ENCODE measurements at regions of chr14 and their contacts with region 1.

Region 1: GRCh38 chr14:55129428-55130195 is 560 bp downstream of the LGALS3 start:
- DNase-seq: peak; percentile 18 to 77 (median 50)
- H3K4me3 ChIP-seq: peak overlapping the region; percentile 51
- H3K4me3 Mint-ChIP-seq: peak overlapping the region; percentile 80 to 91 (median 85)
- H3K27ac ChIP-seq: no peak overlapping the region
- H3K27ac Mint-ChIP-seq: peak overlapping the region; percentile 53 to 90 (median 76)
- H3K4me1 ChIP-seq: peaks cover 18% of the 10 kb centered on the region
- H3K4me1 Mint-ChIP-seq: peaks cover 38 to 51% (median 41%) of the 10 kb centered on the region in 3 donors
- H3K27me3 ChIP-seq: no peaks in the 10 kb centered on the region
- H3K27me3 Mint-ChIP-seq: no peaks in the 10 kb centered on the region

Region 2: DNA sequence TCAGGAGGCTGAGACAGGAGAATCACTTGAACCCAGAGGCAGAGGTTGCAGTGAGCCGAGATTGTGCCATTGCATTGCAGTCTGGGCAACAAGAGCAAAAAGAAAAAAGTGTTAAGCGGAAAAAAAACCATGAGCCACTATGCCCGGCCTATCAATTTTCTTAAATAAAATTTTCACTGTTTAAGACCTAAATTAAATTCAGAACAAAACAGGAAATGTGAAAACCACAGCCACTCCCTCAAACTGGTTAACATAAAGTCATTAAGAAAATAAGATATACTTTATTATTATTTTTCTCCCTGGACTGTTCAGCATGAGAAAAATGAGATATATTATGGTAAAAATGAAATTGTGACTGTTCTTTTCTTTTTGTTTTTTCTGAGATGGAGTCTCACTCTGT is 182.4 kb before region 1 on chr14:
- CTCF ChIA-PET with region 1: no interaction called
- POLR2A ChIA-PET with region 1: no interaction called
- DNase-seq: no peak
- H3K4me3 ChIP-seq: no peak overlapping the region
- H3K4me3 Mint-ChIP-seq: peak overlapping the region in 1 of 7 donors; percentile 11
- H3K27ac ChIP-seq: no peak overlapping the region
- H3K27ac Mint-ChIP-seq: peak overlapping the region in 2 of 8 donors; percentile 15 to 57
- H3K4me1 ChIP-seq: no peaks in the 10 kb centered on the region
- H3K4me1 Mint-ChIP-seq: peaks cover 2 to 22% (median 7%) of the 10 kb centered on the region in 3 donors
- H3K27me3 ChIP-seq: no peaks in the 10 kb centered on the region
- H3K27me3 Mint-ChIP-seq: no peaks in the 10 kb centered on the region

Region 3: DNA sequence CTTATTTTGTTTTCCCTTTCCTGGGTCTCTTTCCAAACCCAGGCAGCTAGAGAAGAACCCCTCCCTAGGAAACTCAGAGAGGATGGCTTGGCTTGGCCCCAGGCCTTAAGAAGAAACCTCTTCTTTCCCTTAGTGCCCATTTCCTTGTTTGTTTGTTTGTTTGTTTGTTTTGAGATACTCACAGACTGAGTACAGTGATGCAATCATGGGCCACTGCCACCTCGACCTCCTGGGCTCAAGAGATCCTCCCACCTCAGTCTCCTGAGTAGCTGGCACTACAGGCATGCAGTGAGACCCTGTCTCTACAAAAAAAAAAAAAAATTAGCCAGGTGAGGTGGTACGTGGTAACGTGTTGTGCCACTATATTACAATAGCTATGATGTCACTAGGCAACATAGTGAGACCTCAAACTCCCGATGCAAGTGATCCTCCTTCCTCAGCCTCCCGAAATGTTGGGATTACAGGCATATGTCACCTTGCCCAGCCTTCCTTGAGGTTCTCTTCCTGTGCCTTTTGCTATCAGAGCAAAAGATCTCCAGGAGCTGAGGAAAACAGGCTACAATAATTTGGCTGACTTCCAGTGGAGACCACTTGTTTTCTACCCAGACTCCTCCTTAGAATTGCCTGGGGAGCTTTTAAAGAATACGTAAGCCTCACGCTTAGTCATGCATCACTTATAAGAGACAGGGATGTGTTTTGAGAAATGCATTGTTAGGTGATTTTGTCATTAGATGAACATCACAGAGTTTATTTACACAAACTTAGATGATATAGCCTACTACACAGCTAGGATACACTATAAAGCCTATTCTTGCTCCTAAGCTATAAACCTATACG is 35.1 kb before region 1 on chr14:
- CTCF ChIA-PET with region 1: interaction called, 11 read pairs
- POLR2A ChIA-PET with region 1: interaction called, 6 read pairs
- DNase-seq: no peak
- H3K4me3 ChIP-seq: no peak overlapping the region
- H3K4me3 Mint-ChIP-seq: no peak overlapping the region
- H3K27ac ChIP-seq: no peak overlapping the region
- H3K27ac Mint-ChIP-seq: peak overlapping the region in 1 of 8 donors; percentile 19
- H3K4me1 ChIP-seq: peaks cover 12% of the 10 kb centered on the region
- H3K4me1 Mint-ChIP-seq: peaks cover 21 to 37% (median 24%) of the 10 kb centered on the region in 3 donors
- H3K27me3 ChIP-seq: no peaks in the 10 kb centered on the region
- H3K27me3 Mint-ChIP-seq: no peaks in the 10 kb centered on the region

Region 4: DNA sequence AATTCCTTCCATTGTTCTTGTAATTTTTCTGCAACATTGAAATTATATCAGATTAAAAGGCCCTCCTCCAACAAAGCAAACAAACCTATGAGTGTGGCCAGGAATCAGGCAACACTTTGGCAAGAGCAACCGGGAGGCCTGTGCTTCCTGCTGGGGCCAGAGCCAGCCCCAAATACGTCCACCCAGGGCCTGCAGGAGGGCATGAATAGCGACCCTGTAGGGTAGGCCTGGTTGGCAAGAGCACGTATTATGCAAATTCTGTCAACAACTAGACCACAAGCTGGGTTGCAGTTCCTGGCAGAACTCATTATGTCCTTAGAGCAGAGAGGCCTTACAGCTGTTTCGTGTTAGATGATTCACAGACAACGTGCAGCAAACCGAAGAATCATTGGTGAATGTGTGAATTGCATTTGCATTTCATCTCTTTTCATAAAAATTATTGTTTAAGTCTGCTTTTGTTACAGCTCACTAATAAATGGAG is 27.4 kb before region 1 on chr14:
- CTCF ChIA-PET with region 1: interaction called, 32 read pairs
- POLR2A ChIA-PET with region 1: interaction called, 38 read pairs
- DNase-seq: peak; percentile 19 to 78 (median 36)
- H3K4me3 ChIP-seq: no peak overlapping the region
- H3K4me3 Mint-ChIP-seq: peak overlapping the region; percentile 41 to 89 (median 72)
- H3K27ac ChIP-seq: peak overlapping the region; percentile 68
- H3K27ac Mint-ChIP-seq: peak overlapping the region; percentile 92 to 99 (median 98)
- H3K4me1 ChIP-seq: peaks cover 44% of the 10 kb centered on the region
- H3K4me1 Mint-ChIP-seq: peaks cover 58 to 72% (median 59%) of the 10 kb centered on the region in 3 donors
- H3K27me3 ChIP-seq: no peaks in the 10 kb centered on the region
- H3K27me3 Mint-ChIP-seq: no peaks in the 10 kb centered on the region